ENCODE measurements at regions of chr1 and their contacts with region 1.

Region 1: GRCh38 chr1:234730770-234731568 is 121.0 kb upstream of the IRF2BP2 start:
- DNase-seq: peak in 11 of 14 experiments; percentile 13 to 84 (median 45)
- ATAC-seq: peak; percentile 77
- H3K4me3 ChIP-seq: no peak overlapping the region
- H3K4me3 Mint-ChIP-seq: peak overlapping the region; percentile 9
- H3K27ac ChIP-seq: peak overlapping the region; percentile 44 to 67
- H3K27ac Mint-ChIP-seq: peak overlapping the region; percentile 83
- H3K4me1 ChIP-seq: peaks cover 71% of the 10 kb centered on the region
- H3K4me1 Mint-ChIP-seq: peaks cover 67% of the 10 kb centered on the region
- H3K27me3 ChIP-seq: no peaks in the 10 kb centered on the region
- H3K27me3 Mint-ChIP-seq: no peaks in the 10 kb centered on the region
- CTCF ChIP-seq: no peak

Region 2: GRCh38 chr1:234521807-234522195 is 209.2 kb before region 1 on chr1:
- CTCF ChIA-PET with region 1: no interaction called
- POLR2A ChIA-PET with region 1: no interaction called
- intact Hi-C with region 1: loop called in 1 of 2 experiments (anchors 1 kb)
- DNase-seq: no peak
- ATAC-seq: no peak
- H3K4me3 ChIP-seq: no peak overlapping the region
- H3K4me3 Mint-ChIP-seq: no peak overlapping the region
- H3K27ac ChIP-seq: no peak overlapping the region
- H3K27ac Mint-ChIP-seq: no peak overlapping the region
- H3K4me1 ChIP-seq: peaks cover 16% of the 10 kb centered on the region
- H3K4me1 Mint-ChIP-seq: peaks cover 6% of the 10 kb centered on the region
- H3K27me3 ChIP-seq: no peaks in the 10 kb centered on the region
- H3K27me3 Mint-ChIP-seq: no peaks in the 10 kb centered on the region
- CTCF ChIP-seq: no peak

Region 3: GRCh38 chr1:234758851-234759250 is 27.9 kb after region 1 on chr1:
- CTCF ChIA-PET with region 1: no interaction called
- POLR2A ChIA-PET with region 1: no interaction called
- intact Hi-C with region 1: loop called in 1 of 2 experiments (anchors 1 kb)
- DNase-seq: peak in 10 of 14 experiments; percentile 19 to 90 (median 46)
- ATAC-seq: peak; percentile 85
- H3K4me3 ChIP-seq: no peak overlapping the region
- H3K4me3 Mint-ChIP-seq: peak overlapping the region; percentile 31
- H3K27ac ChIP-seq: no peak overlapping the region
- H3K27ac Mint-ChIP-seq: peak overlapping the region; percentile 93
- H3K4me1 ChIP-seq: peaks cover 37% of the 10 kb centered on the region
- H3K4me1 Mint-ChIP-seq: peaks cover 58% of the 10 kb centered on the region
- H3K27me3 ChIP-seq: no peaks in the 10 kb centered on the region
- H3K27me3 Mint-ChIP-seq: no peaks in the 10 kb centered on the region
- CTCF ChIP-seq: no peak

Region 4: GRCh38 chr1:234963180-234963903 is 232.4 kb after region 1 on chr1:
- CTCF ChIA-PET with region 1: no interaction called
- POLR2A ChIA-PET with region 1: no interaction called
- intact Hi-C with region 1: loop called in 1 of 2 experiments (anchors 5 kb)
- DNase-seq: peak; percentile 59 to 97 (median 78)
- ATAC-seq: peak; percentile 79
- H3K4me3 ChIP-seq: peak overlapping the region; percentile 25
- H3K4me3 Mint-ChIP-seq: peak overlapping the region; percentile 78
- H3K27ac ChIP-seq: peak overlapping the region; percentile 71 to 81
- H3K27ac Mint-ChIP-seq: peak overlapping the region; percentile 90
- H3K4me1 ChIP-seq: peaks cover 63% of the 10 kb centered on the region
- H3K4me1 Mint-ChIP-seq: peaks cover 66% of the 10 kb centered on the region
- H3K27me3 ChIP-seq: no peaks in the 10 kb centered on the region
- H3K27me3 Mint-ChIP-seq: no peaks in the 10 kb centered on the region
- CTCF ChIP-seq: no peak

Measured in CD4-positive, alpha-beta T cell (primary cell).